Activated naive CD4-positive, alpha-beta T cell treated with anti-CD3 and anti-CD28 coated beads for 36 hours (primary cell): ENCODE measurements at regions of chr3 and their contacts with region 1.

Region 1: GRCh38 chr3:71305231-71306206 is 278.0 kb downstream of the FOXP1 start:
- DNase-seq: peak; percentile 44
- H3K4me3 Mint-ChIP-seq: peak overlapping the region; percentile 90
- H3K27ac Mint-ChIP-seq: peak overlapping the region; percentile 94
- H3K4me1 Mint-ChIP-seq: peaks cover 61% of the 10 kb centered on the region
- H3K27me3 Mint-ChIP-seq: no peaks in the 10 kb centered on the region

Region 2: DNA sequence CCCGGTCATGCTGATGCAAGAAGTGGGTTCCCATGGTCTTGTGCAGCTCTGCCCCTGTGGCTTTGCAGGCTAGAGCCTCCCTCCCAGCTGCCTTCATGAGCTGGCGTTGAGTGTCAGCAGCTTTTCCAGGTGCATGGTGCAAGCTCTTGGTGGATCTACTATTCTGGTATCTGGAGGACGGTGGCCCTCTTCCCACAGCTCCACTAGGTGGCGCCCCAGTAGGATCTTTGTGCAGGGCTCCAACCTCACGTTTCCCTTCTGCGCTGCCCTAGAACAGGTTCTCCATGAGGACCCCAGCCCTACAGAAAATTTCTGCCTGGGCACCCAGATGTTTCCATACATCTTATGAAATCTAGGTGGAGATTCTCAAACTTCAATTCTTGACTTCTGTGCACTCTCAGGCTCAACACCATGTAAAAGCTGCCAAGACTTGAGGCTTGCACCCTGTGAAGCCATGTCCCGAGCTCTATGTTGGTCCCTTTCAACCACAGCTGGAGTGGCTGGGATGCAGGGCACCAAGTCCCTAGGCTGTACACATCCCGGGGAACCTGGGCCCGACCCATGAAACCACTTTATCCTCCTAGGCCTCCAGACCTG is 754.7 kb before region 1 on chr3:
- CTCF ChIA-PET with region 1: interaction called, 4 read pairs
- intact Hi-C with region 1: loop called (anchors 1 kb)
- DNase-seq: peak; percentile 88
- H3K4me3 Mint-ChIP-seq: no peak overlapping the region
- H3K27ac Mint-ChIP-seq: no peak overlapping the region
- H3K4me1 Mint-ChIP-seq: no peaks in the 10 kb centered on the region
- H3K27me3 Mint-ChIP-seq: no peaks in the 10 kb centered on the region

Region 3: GRCh38 chr3:70982700-70983140 is 322.8 kb before region 1 on chr3:
- CTCF ChIA-PET with region 1: no interaction called
- intact Hi-C with region 1: loop called (anchors 2 kb)
- DNase-seq: peak; percentile 66
- H3K4me3 Mint-ChIP-seq: no peak overlapping the region
- H3K27ac Mint-ChIP-seq: peak overlapping the region; percentile 96
- H3K4me1 Mint-ChIP-seq: peaks cover 74% of the 10 kb centered on the region
- H3K27me3 Mint-ChIP-seq: no peaks in the 10 kb centered on the region

Region 4: GRCh38 chr3:71087143-71088018 is 218.1 kb before region 1 on chr3:
- CTCF ChIA-PET with region 1: interaction called, 3 read pairs
- intact Hi-C with region 1: loop called (anchors 1 kb)
- DNase-seq: peak; percentile 69
- H3K4me3 Mint-ChIP-seq: peak overlapping the region; percentile 14
- H3K27ac Mint-ChIP-seq: peak overlapping the region; percentile 88
- H3K4me1 Mint-ChIP-seq: peaks cover 89% of the 10 kb centered on the region
- H3K27me3 Mint-ChIP-seq: no peaks in the 10 kb centered on the region

Region 5: GRCh38 chr3:71208211-71209108 is 97.1 kb before region 1 on chr3:
- CTCF ChIA-PET with region 1: no interaction called
- intact Hi-C with region 1: no loop called
- DNase-seq: no peak
- H3K4me3 Mint-ChIP-seq: no peak overlapping the region
- H3K27ac Mint-ChIP-seq: peak overlapping the region; percentile 70
- H3K4me1 Mint-ChIP-seq: peaks cover 83% of the 10 kb centered on the region
- H3K27me3 Mint-ChIP-seq: no peaks in the 10 kb centered on the region

Region 6: DNA sequence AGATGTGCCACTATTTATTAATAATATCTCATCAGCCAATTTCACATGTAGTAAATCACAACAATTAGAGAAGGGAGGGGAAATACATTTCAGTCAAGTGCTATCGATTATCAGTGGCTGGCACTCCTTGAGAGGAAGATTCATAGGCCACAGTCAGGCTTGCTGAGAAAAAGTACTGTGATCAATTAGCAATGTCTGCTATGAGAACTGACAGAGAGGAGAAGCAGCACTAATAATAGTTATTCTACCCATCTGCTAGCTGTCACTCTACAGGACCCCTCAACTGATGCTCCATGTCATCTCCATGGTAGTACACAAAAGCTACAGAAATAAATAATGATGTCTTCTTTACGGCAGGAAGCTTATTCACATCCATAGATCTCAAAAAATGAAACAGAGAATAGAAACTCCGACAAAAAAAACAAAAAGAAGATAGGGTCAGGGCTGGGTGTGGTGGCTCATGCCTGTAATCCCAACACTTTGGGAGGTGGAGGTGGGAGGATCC is 73.3 kb before region 1 on chr3:
- CTCF ChIA-PET with region 1: interaction called, 9 read pairs
- intact Hi-C with region 1: loop called (anchors 1 kb)
- DNase-seq: peak; percentile 42
- H3K4me3 Mint-ChIP-seq: peak overlapping the region; percentile 2
- H3K27ac Mint-ChIP-seq: peak overlapping the region; percentile 57
- H3K4me1 Mint-ChIP-seq: peaks cover 78% of the 10 kb centered on the region
- H3K27me3 Mint-ChIP-seq: no peaks in the 10 kb centered on the region

Region 7: GRCh38 chr3:71380096-71380495 is 74.6 kb after region 1 on chr3:
- CTCF ChIA-PET with region 1: interaction called, 6 read pairs
- intact Hi-C with region 1: loop called (anchors 1 kb)
- DNase-seq: no peak
- H3K4me3 Mint-ChIP-seq: no peak overlapping the region
- H3K27ac Mint-ChIP-seq: peak overlapping the region; percentile 69
- H3K4me1 Mint-ChIP-seq: peaks cover 88% of the 10 kb centered on the region
- H3K27me3 Mint-ChIP-seq: no peaks in the 10 kb centered on the region

Region 8: GRCh38 chr3:71512000-71512399 is 206.5 kb after region 1 on chr3:
- CTCF ChIA-PET with region 1: interaction called, 3 read pairs
- intact Hi-C with region 1: loop called (anchors 1 kb)
- DNase-seq: peak; percentile 59
- H3K4me3 Mint-ChIP-seq: no peak overlapping the region
- H3K27ac Mint-ChIP-seq: peak overlapping the region; percentile 6
- H3K4me1 Mint-ChIP-seq: peaks cover 12% of the 10 kb centered on the region
- H3K27me3 Mint-ChIP-seq: no peaks in the 10 kb centered on the region